PC-3 (cell line): ENCODE measurements at regions of chr9 and their contacts with region 1.

Region 1: GRCh38 chr9:97982683-97983588 is at the start of gene ANP32B:
- DNase-seq: peak; percentile 85
- ATAC-seq: peak; percentile 82
- H3K4me3 ChIP-seq: peak within 1 kb of the TSS; percentile 92
- H3K27ac ChIP-seq: peak within 1 kb of the TSS; percentile 81
- H3K4me1 ChIP-seq: peaks cover 21% of the 10 kb centered on the region
- H3K27me3 ChIP-seq: no peaks in the 10 kb centered on the region
- CTCF ChIP-seq: peak; percentile 47; the same call in 1 of the 2 replicates
- total RNA-seq, gene ANP32B: 14.8 and 32.6 TPM in 2 replicates

Region 2: DNA sequence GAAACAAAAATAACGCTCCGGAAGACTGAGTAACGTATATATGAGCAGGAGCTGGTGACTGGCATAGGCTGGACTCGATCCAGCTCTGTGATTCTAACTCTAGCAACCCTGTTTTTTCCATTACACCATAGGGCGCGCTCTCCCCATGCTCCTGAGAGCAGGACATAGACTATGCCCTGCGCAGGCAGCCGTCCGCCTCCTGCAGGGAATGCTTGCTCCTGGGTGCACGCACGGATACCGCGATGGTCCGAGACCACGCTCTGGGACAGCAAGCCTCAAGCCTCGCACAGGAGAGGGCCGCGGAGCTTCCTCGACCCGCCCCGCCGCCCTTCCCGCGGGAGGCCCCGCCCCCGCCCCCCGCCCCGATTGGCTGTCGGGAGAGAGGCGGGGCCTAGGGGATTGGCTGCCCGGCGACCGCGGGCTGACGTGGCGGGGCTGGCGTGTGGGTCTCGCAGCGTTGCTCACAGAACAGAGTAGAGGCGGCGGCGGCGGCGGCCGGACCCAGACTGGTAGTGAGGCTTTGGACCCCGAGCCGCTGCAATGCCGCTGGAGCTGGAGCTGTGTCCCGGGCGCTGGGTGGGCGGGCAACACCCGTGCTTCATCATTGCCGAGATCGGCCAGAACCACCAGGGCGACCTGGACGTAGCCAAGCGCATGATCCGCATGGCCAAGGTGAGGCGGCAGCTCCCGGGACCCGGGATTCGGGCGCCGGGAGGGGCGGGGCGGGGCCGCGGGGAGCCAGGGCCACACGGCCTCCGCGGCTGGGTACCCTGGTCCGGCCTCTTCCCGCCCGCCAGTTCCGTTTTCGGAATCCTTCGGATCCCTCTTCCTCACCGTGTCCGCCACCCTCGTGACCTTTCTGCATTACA is 73.6 kb after region 1 on chr9 and contains the start of gene NANS:
- CTCF ChIA-PET with region 1: interaction called, 3 read pairs
- POLR2A ChIA-PET with region 1: interaction called, 6 read pairs
- intact Hi-C with region 1: loop called (anchors 2 kb)
- DNase-seq: peak; percentile 89
- ATAC-seq: peak; percentile 94
- H3K4me3 ChIP-seq: peak within 1 kb of the TSS; percentile 97
- H3K27ac ChIP-seq: peak within 1 kb of the TSS; percentile 77
- H3K4me1 ChIP-seq: peaks cover 12% of the 10 kb centered on the region
- H3K27me3 ChIP-seq: no peaks in the 10 kb centered on the region
- CTCF ChIP-seq: no peak
- total RNA-seq, gene NANS: 93.0 and 94.8 TPM in 2 replicates

Region 3: DNA sequence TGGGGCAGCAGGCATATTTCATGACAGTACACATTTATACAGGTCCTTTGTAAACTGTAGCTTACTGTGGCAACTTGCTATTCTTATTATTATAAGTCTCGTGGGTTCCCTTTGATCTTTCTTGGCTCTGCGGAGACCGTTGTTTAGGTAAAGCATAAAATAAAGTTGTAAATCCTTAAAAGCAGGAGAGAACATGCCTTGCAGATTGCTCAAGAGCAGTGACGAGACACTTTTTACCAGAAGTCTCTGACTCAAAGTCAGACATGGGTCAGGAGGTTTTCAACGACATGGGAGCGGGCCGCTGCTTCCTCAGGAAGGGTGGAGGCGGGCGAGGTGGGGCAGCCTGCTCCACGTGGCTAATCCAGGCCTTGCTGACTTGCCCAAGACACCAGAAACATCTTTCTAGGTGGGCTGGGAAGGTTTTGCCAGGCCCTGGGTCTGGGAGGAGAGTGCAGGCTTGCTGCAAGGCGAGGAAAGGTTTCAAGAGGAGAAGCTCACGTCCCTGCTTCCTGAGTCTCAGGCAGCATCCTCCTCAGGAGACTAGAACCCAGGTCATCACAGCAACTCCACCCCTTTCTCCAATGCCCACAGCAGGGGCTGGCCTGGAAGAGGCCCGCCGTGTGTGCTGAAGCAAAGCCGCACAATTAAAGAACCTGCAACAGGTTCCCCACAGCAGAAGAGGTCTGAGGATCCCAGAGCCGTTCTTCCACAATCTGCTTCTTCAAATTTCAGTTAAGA is 266.0 kb after region 1 on chr9:
- CTCF ChIA-PET with region 1: no interaction called
- POLR2A ChIA-PET with region 1: no interaction called
- intact Hi-C with region 1: no loop called
- DNase-seq: peak; percentile 62
- ATAC-seq: peak; percentile 24; the same call in 1 of the 2 replicates
- H3K4me3 ChIP-seq: no peak overlapping the region
- H3K27ac ChIP-seq: peak overlapping the region; percentile 87
- H3K4me1 ChIP-seq: peaks cover 53% of the 10 kb centered on the region
- H3K27me3 ChIP-seq: no peaks in the 10 kb centered on the region
- CTCF ChIP-seq: no peak